ENCODE measurements at regions of chr1 and their contacts with region 1.

Region 1: DNA sequence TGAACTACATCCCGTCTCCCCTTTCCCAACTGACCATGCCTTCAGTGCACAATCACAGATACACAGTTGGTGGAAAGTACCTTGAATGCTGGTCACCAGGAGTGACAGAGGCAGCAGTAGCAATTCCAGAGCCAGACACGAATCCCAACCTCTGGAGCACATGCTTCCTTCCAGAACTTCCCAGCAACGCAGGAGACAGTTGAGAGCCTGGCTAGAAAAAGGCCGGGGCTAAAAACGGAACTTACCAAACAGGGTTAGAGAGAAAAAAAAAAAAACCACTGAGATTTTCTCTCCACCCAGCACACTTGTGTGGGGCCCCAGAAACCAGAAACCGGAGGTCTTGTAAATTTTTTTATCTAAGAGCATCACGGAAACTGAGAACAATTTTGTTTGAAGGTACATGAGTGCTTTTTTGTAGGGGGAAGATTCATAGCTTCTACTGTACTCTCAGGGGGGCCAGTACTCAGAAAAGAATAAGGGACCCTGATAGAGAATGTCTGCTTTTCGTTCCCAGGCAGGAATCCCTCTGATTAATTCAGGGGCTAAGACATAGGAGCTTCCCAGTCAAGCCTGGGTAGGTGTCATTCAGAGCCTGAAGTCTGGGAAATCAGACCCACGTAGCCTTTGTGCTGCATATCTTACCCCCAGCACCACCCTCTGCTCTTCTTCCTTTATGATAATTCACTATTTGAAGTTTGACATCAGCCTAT is at the start of gene CD48:
- DNase-seq: no peak
- H3K4me3 ChIP-seq: no peak within 1 kb of the TSS
- H3K27ac ChIP-seq: no peak within 1 kb of the TSS
- H3K4me1 ChIP-seq: no peaks in the 10 kb centered on the region
- H3K27me3 ChIP-seq: no peaks in the 10 kb centered on the region
- CTCF ChIP-seq: no peak
- EP300 ChIP-seq: no peak
- POLR2A ChIP-seq: no peak
- RAD21 ChIP-seq: no peak
- total RNA-seq, gene CD48: not detected in 2 replicates

Region 2: GRCh38 chr1:160590488-160590887 is 121.3 kb before region 1 on chr1:
- CTCF ChIA-PET with region 1: no interaction called
- POLR2A ChIA-PET with region 1: no interaction called
- DNase-seq: no peak
- H3K4me3 ChIP-seq: no peak overlapping the region
- H3K27ac ChIP-seq: no peak overlapping the region
- H3K4me1 ChIP-seq: no peaks in the 10 kb centered on the region
- H3K27me3 ChIP-seq: no peaks in the 10 kb centered on the region
- CTCF ChIP-seq: no peak
- EP300 ChIP-seq: no peak
- POLR2A ChIP-seq: no peak
- RAD21 ChIP-seq: no peak

Region 3: DNA sequence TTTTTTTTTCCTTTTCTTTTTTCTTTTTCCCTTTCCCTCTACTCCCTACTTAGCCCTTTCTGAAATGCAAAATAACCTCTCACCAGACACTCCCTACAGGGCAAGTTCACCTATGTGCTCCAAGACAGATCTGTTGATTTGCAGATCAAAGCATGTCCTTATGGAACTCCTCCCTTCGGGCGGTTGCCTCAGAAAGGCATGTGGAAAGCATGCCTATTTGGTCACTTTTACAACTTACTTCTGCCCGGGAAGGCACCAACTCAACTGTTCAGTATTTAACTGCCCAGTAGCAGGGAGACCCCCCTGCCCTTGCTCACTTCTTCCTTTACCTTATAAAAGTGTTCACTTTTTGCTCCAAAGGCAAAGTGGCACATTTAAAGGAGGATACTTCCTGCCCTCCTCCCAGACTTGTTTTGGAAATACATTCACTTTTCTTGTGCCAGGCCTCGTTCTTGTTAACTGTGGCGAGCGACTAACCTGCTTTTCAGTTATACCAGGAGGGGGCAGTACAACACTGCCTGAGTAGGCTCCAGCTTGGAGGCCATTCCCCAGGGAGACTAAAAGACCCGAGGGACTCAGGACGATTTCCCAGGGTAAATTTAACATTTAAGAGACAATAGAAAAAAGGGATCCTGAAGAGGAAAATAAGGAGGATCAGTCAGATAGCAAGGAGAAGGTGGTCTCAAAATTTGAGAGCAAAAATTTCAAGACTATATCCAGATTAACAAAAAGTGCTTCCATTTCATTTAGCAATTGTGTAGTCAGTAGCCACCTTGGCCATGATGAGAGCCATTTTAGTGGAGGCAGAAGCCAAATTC is 14.9 kb after region 1 on chr1:
- CTCF ChIA-PET with region 1: interaction called, 19 read pairs
- POLR2A ChIA-PET with region 1: interaction called, 5 read pairs
- DNase-seq: peak; percentile 62 to 68
- H3K4me3 ChIP-seq: no peak overlapping the region
- H3K27ac ChIP-seq: peak overlapping the region; percentile 12; the same call in 1 of the 2 replicates
- H3K4me1 ChIP-seq: peaks cover 0 to 5% (median 2%) of the 10 kb centered on the region in 4 experiments; a peak in 3 of 7 replicates
- H3K27me3 ChIP-seq: no peaks in the 10 kb centered on the region
- CTCF ChIP-seq: peak; percentile 59 to 92 (median 81)
- EP300 ChIP-seq: no peak
- POLR2A ChIP-seq: no peak
- RAD21 ChIP-seq: peak; percentile 95 to 96